CD4-positive, alpha-beta T cell (primary cell): ENCODE measurements at regions of chr10 and their contacts with region 1.

Region 1: DNA sequence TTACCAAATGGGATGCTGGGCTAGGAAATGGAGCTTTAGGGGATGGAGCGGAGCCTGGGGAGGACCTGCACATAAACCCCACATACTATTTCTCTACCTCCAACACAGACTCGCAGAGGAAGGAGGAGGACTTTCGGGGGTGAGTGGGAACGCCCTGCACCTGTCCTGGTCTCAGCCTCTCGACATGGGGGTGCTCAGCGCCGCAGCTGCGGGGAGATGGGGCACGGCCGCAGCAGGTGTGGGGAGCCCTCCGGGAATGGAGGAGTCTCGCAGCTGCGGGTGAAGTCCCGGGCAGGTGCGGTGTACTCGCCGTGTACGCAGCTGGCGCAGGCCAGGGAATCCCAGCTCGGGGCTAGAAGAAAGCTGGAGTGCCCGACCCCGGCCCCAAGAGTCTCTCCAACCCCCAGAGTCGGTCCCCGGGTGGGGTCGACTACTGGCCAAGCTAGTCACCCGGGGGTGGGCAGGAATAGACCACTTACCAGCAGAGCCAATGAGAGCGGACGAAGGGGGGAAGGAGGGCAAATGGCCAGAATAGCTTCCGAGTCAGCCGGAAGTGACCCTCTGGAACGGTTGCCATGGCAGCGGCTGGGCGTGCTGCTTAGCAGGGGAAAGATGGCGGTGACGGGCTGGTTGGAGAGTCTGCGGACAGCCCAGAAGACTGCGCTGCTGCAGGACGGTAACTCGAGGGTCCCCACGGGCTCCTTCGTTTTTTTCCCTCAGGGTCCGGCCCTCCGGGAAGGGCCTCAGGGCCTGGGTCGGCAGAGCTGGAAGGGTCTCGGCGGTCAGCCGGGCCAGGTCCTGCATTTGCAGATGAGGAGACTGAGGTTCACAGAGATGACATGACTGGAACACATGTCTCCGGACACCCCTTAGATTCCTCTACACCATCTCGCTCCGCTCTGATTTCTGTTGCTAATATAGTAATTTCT is at the starts of genes DPCD and POLL:
- DNase-seq: peak; percentile 80 to 94 (median 88)
- ATAC-seq: peak; percentile 90
- H3K4me3 ChIP-seq: peak within 1 kb of the TSS; percentile 72
- H3K4me3 Mint-ChIP-seq: peak within 1 kb of the TSS; percentile 97
- H3K27ac ChIP-seq: peak within 1 kb of the TSS in 1 of 2 donors; percentile 59
- H3K27ac Mint-ChIP-seq: peak within 1 kb of the TSS; percentile 79
- H3K4me1 ChIP-seq: peaks cover 24% of the 10 kb centered on the region
- H3K4me1 Mint-ChIP-seq: peaks cover 24% of the 10 kb centered on the region
- H3K27me3 ChIP-seq: no peaks in the 10 kb centered on the region
- H3K27me3 Mint-ChIP-seq: peaks cover 6% of the 10 kb centered on the region
- CTCF ChIP-seq: no peak
- total RNA-seq, gene DPCD: 0.31 to 0.96 TPM
- total RNA-seq, gene POLL: 23.3 to 24.3 TPM

Region 2: DNA sequence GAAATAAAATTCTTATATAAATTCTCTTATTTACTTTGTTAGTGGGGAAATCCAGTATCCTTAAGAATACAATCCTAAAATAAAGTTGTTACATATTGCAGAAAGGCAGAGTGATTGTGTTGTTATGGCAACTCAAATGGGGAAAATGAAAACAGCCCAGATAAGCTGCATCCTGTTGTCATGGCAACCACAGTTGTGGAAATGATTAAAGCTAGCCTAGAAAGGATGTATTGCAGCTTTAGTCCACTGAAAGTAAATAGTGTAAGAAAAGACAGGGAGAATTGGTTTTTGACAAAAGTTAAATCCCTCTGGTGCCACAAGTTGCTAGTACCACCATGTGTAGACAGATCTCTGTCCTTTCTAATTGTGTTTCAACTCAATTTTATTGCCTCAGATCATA is 190.8 kb before region 1 on chr10:
- CTCF ChIA-PET with region 1: no interaction called
- POLR2A ChIA-PET with region 1: no interaction called
- intact Hi-C with region 1: no loop called
- DNase-seq: peak in 8 of 14 experiments; percentile 7 to 85 (median 32)
- ATAC-seq: peak; percentile 83
- H3K4me3 ChIP-seq: no peak overlapping the region
- H3K4me3 Mint-ChIP-seq: no peak overlapping the region
- H3K27ac ChIP-seq: no peak overlapping the region
- H3K27ac Mint-ChIP-seq: peak overlapping the region; percentile 46
- H3K4me1 ChIP-seq: peaks cover 8% of the 10 kb centered on the region
- H3K4me1 Mint-ChIP-seq: peaks cover 52% of the 10 kb centered on the region
- H3K27me3 ChIP-seq: no peaks in the 10 kb centered on the region
- H3K27me3 Mint-ChIP-seq: no peaks in the 10 kb centered on the region
- CTCF ChIP-seq: no peak

Region 3: GRCh38 chr10:101693978-101694673 is 106.1 kb after region 1 on chr10:
- CTCF ChIA-PET with region 1: no interaction called
- POLR2A ChIA-PET with region 1: interaction called, 5 read pairs
- intact Hi-C with region 1: loop called in 1 of 2 experiments (anchors 5 kb)
- DNase-seq: peak; percentile 46 to 83 (median 63)
- ATAC-seq: peak; percentile 58
- H3K4me3 ChIP-seq: peak overlapping the region; percentile 88
- H3K4me3 Mint-ChIP-seq: peak overlapping the region; percentile 99
- H3K27ac ChIP-seq: peak overlapping the region; percentile 96 to 97
- H3K27ac Mint-ChIP-seq: peak overlapping the region; percentile 98
- H3K4me1 ChIP-seq: peaks cover 23% of the 10 kb centered on the region
- H3K4me1 Mint-ChIP-seq: peaks cover 57% of the 10 kb centered on the region
- H3K27me3 ChIP-seq: no peaks in the 10 kb centered on the region
- H3K27me3 Mint-ChIP-seq: no peaks in the 10 kb centered on the region
- CTCF ChIP-seq: no peak